Activated CD8-positive, alpha-beta T cell treated with anti-CD3 and anti-CD28 coated beads for 36 hours (primary cell): ENCODE measurements at regions of chr10 and their contacts with region 1.

Region 1: GRCh38 chr10:86971232-86971991 is 3.1 kb downstream of the ADIRF start:
- DNase-seq: peak; percentile 76
- ATAC-seq: peak; percentile 81
- H3K4me3 Mint-ChIP-seq: peak overlapping the region; percentile 67
- H3K27ac Mint-ChIP-seq: peak overlapping the region; percentile 68
- H3K4me1 Mint-ChIP-seq: peaks cover 17% of the 10 kb centered on the region
- H3K27me3 Mint-ChIP-seq: peaks cover 2% of the 10 kb centered on the region
- CTCF ChIP-seq: no peak

Region 2: GRCh38 chr10:86888585-86889381 is 82.6 kb before region 1 on chr10:
- CTCF ChIA-PET with region 1: no interaction called
- POLR2A ChIA-PET with region 1: no interaction called
- intact Hi-C with region 1: no loop called
- DNase-seq: no peak
- ATAC-seq: peak; percentile 90
- H3K4me3 Mint-ChIP-seq: no peak overlapping the region
- H3K27ac Mint-ChIP-seq: peak overlapping the region; percentile 9
- H3K4me1 Mint-ChIP-seq: peaks cover 6% of the 10 kb centered on the region
- H3K27me3 Mint-ChIP-seq: no peaks in the 10 kb centered on the region
- CTCF ChIP-seq: no peak

Region 3: GRCh38 chr10:86936661-86937501 is 34.5 kb before region 1 on chr10:
- CTCF ChIA-PET with region 1: interaction called, 45 read pairs
- POLR2A ChIA-PET with region 1: interaction called, 3 read pairs
- intact Hi-C with region 1: no loop called
- DNase-seq: no peak
- ATAC-seq: no peak
- H3K4me3 Mint-ChIP-seq: no peak overlapping the region
- H3K27ac Mint-ChIP-seq: no peak overlapping the region
- H3K4me1 Mint-ChIP-seq: peaks cover 6% of the 10 kb centered on the region
- H3K27me3 Mint-ChIP-seq: no peaks in the 10 kb centered on the region
- CTCF ChIP-seq: no peak